H1 (cell line): ENCODE measurements at regions of chr4 and their contacts with region 1.

Region 1: GRCh38 chr4:85084380-85085094 is 118.0 kb upstream of the WDFY3 start:
- DNase-seq: no peak
- H3K4me3 ChIP-seq: no peak overlapping the region
- H3K27ac ChIP-seq: no peak overlapping the region
- H3K4me1 ChIP-seq: no peaks in the 10 kb centered on the region
- H3K27me3 ChIP-seq: no peaks in the 10 kb centered on the region
- CTCF ChIP-seq: peak in 2 of 3 experiments; percentile 48 to 60; a peak in 2 of 4 replicates
- EP300 ChIP-seq: no peak
- POLR2A ChIP-seq: no peak
- RAD21 ChIP-seq: peak; percentile 72 to 75

Region 2: GRCh38 chr4:84907145-84907544 is 177.4 kb before region 1 on chr4:
- CTCF ChIA-PET with region 1: no interaction called
- POLR2A ChIA-PET with region 1: no interaction called
- DNase-seq: no peak
- H3K4me3 ChIP-seq: no peak overlapping the region
- H3K27ac ChIP-seq: no peak overlapping the region
- H3K4me1 ChIP-seq: peaks cover 0 to 4% (median 0%) of the 10 kb centered on the region in 4 experiments; a peak in 2 of 7 replicates
- H3K27me3 ChIP-seq: no peaks in the 10 kb centered on the region
- CTCF ChIP-seq: no peak
- EP300 ChIP-seq: no peak
- POLR2A ChIP-seq: no peak
- RAD21 ChIP-seq: no peak

Region 3: DNA sequence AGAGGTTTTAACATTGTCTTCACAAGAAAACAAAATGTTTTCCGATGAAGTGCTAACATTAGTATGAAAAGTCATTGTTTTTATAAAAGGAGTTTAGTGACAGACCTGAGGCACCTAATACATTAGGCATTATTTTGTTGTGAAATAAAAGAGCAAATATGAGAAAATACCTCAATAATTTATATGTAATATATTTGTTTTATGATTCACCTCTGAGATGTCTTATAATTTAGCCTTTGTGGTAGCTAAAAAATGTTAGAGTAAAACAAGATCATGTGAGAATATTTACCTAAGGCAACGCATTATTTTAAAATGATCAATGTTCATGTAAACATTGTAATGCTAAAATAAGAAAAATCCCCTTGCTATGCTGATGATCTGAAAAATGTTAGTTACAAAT is 17.2 kb before region 1 on chr4:
- CTCF ChIA-PET with region 1: interaction called, 15 read pairs
- POLR2A ChIA-PET with region 1: no interaction called
- DNase-seq: no peak
- H3K4me3 ChIP-seq: no peak overlapping the region
- H3K27ac ChIP-seq: no peak overlapping the region
- H3K4me1 ChIP-seq: no peaks in the 10 kb centered on the region; a peak in 1 of 7 replicates
- H3K27me3 ChIP-seq: no peaks in the 10 kb centered on the region
- CTCF ChIP-seq: no peak
- EP300 ChIP-seq: no peak
- POLR2A ChIP-seq: no peak
- RAD21 ChIP-seq: no peak

Region 4: GRCh38 chr4:85127653-85128052 is 43.1 kb after region 1 on chr4:
- CTCF ChIA-PET with region 1: interaction called, 20 read pairs
- POLR2A ChIA-PET with region 1: no interaction called
- DNase-seq: peak; percentile 59 to 62
- H3K4me3 ChIP-seq: no peak overlapping the region
- H3K27ac ChIP-seq: no peak overlapping the region
- H3K4me1 ChIP-seq: peaks cover 2 to 16% (median 10%) of the 10 kb centered on the region in 4 experiments; a peak in 5 of 7 replicates
- H3K27me3 ChIP-seq: no peaks in the 10 kb centered on the region
- CTCF ChIP-seq: peak; percentile 72 to 75 (median 74)
- EP300 ChIP-seq: no peak
- POLR2A ChIP-seq: no peak
- RAD21 ChIP-seq: peak; percentile 39 to 61; a peak in 3 of 4 replicates

Region 5: GRCh38 chr4:85153221-85153620 is 68.7 kb after region 1 on chr4:
- CTCF ChIA-PET with region 1: interaction called, 10 read pairs
- POLR2A ChIA-PET with region 1: no interaction called
- DNase-seq: no peak
- H3K4me3 ChIP-seq: no peak overlapping the region
- H3K27ac ChIP-seq: no peak overlapping the region
- H3K4me1 ChIP-seq: no peaks in the 10 kb centered on the region
- H3K27me3 ChIP-seq: no peaks in the 10 kb centered on the region
- CTCF ChIP-seq: no peak
- EP300 ChIP-seq: no peak
- POLR2A ChIP-seq: no peak
- RAD21 ChIP-seq: no peak

Region 6: DNA sequence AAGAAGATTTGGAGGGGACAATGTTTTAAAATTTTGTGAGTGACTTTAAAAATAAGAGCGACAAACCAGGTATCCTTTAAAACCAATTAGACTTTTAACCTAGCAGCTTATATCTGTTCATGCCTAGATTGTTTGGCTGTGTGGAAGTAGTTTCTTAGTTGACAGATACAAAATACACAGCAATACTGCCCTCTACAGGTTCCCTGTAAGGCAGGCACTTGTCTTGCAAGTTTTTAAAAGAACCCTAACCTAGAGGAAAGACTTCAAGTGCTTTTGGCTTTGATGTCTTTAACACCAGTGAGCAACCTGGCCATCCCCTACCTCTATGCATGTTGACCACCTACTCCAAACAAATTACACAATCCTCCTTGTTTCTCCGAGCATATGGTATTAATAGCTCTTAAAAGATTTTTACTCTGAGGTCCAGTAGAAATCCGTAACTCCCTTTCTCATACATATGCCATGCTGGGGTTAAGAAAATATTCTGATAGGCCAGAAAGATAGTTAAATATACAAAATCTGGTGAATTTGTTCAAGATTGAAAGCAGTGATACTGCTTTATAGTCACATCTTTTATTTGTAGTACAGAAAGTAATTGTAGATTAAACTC is 663.5 kb after region 1 on chr4:
- CTCF ChIA-PET with region 1: interaction called, 10 read pairs
- POLR2A ChIA-PET with region 1: no interaction called
- DNase-seq: no peak
- H3K4me3 ChIP-seq: no peak overlapping the region
- H3K27ac ChIP-seq: no peak overlapping the region
- H3K4me1 ChIP-seq: no peaks in the 10 kb centered on the region
- H3K27me3 ChIP-seq: no peaks in the 10 kb centered on the region
- CTCF ChIP-seq: peak in 2 of 3 experiments; percentile 56 to 79; a peak in 2 of 4 replicates
- EP300 ChIP-seq: no peak
- POLR2A ChIP-seq: no peak
- RAD21 ChIP-seq: peak; percentile 88 to 89